Spleen (tissue), 13 donors: ENCODE measurements at regions of chr5 and their contacts with region 1.

Region 1: GRCh38 chr5:74648835-74649293 is 8.3 kb upstream of the ENC1 start:
- DNase-seq: no peak
- H3K4me3 ChIP-seq: no peak overlapping the region
- H3K27ac ChIP-seq: no peak overlapping the region
- H3K4me1 ChIP-seq: peaks cover 0 to 14% (median 5%) of the 10 kb centered on the region in 6 donors
- H3K27me3 ChIP-seq: no peaks in the 10 kb centered on the region
- CTCF ChIP-seq: peak; percentile 48 to 85 (median 73)
- POLR2A ChIP-seq: no peak

Region 2: GRCh38 chr5:73902327-73903051 is 746.4 kb before region 1 on chr5:
- intact Hi-C with region 1: loop called (anchors 2 kb)
- DNase-seq: no peak
- H3K4me3 ChIP-seq: no peak overlapping the region
- H3K27ac ChIP-seq: no peak overlapping the region
- H3K4me1 ChIP-seq: peaks cover 0 to 13% (median 4%) of the 10 kb centered on the region in 6 donors
- H3K27me3 ChIP-seq: peaks cover 0 to 6% (median 0%) of the 10 kb centered on the region in 7 donors
- CTCF ChIP-seq: peak; percentile 72 to 95 (median 90)
- POLR2A ChIP-seq: no peak

Region 3: GRCh38 chr5:74044936-74045335 is 603.9 kb before region 1 on chr5:
- intact Hi-C with region 1: no loop called
- DNase-seq: no peak
- H3K4me3 ChIP-seq: no peak overlapping the region
- H3K27ac ChIP-seq: no peak overlapping the region
- H3K4me1 ChIP-seq: no peaks in the 10 kb centered on the region
- H3K27me3 ChIP-seq: no peaks in the 10 kb centered on the region
- CTCF ChIP-seq: no peak
- POLR2A ChIP-seq: no peak

Region 4: GRCh38 chr5:75034137-75034750 is 385.4 kb after region 1 on chr5:
- intact Hi-C with region 1: no loop called
- DNase-seq: peak; percentile 72
- H3K4me3 ChIP-seq: no peak overlapping the region
- H3K27ac ChIP-seq: peak overlapping the region in 1 of 8 donors; percentile 18
- H3K4me1 ChIP-seq: peaks cover 0 to 8% (median 2%) of the 10 kb centered on the region in 6 donors
- H3K27me3 ChIP-seq: no peaks in the 10 kb centered on the region
- CTCF ChIP-seq: no peak
- POLR2A ChIP-seq: no peak